Heart right ventricle (tissue), 16 donors: ENCODE measurements at regions of chr12 and their contacts with region 1.

Region 1: GRCh38 chr12:70178038-70178437 is 65.2 kb upstream of the CNOT2 start:
- DNase-seq: no peak
- ATAC-seq: peak in 6 of 8 donors; percentile 38 to 70 (median 42)
- H3K4me3 ChIP-seq: no peak overlapping the region
- H3K27ac ChIP-seq: peak overlapping the region in 4 of 10 donors; percentile 2 to 54 (median 30)
- H3K4me1 ChIP-seq: peaks cover 0 to 6% (median 0%) of the 10 kb centered on the region in 9 donors
- H3K27me3 ChIP-seq: no peaks in the 10 kb centered on the region
- CTCF ChIP-seq: no peak

Region 2: GRCh38 chr12:70560671-70561070 is 382.6 kb after region 1 on chr12:
- intact Hi-C with region 1: loop called in 1 of 10 experiments (anchors 10 kb)
- DNase-seq: no peak
- ATAC-seq: no peak
- H3K4me3 ChIP-seq: no peak overlapping the region
- H3K27ac ChIP-seq: no peak overlapping the region
- H3K4me1 ChIP-seq: no peaks in the 10 kb centered on the region
- H3K27me3 ChIP-seq: peaks cover 0 to 4% (median 0%) of the 10 kb centered on the region in 7 donors
- CTCF ChIP-seq: no peak